ENCODE measurements at regions of chr2 and their contacts with region 1.

Region 1: GRCh38 chr2:216031960-216032689 is 18.8 kb upstream of the MREG start:
- DNase-seq: no peak
- H3K4me3 ChIP-seq: no peak overlapping the region
- H3K27ac ChIP-seq: no peak overlapping the region
- H3K4me1 ChIP-seq: no peaks in the 10 kb centered on the region
- H3K27me3 ChIP-seq: no peaks in the 10 kb centered on the region
- CTCF ChIP-seq: no peak
- POLR2A ChIP-seq: no peak

Region 2: GRCh38 chr2:214960677-214961076 is 1071.4 kb before region 1 on chr2:
- intact Hi-C with region 1: no loop called
- DNase-seq: no peak
- H3K4me3 ChIP-seq: no peak overlapping the region
- H3K27ac ChIP-seq: no peak overlapping the region
- H3K4me1 ChIP-seq: no peaks in the 10 kb centered on the region
- H3K27me3 ChIP-seq: no peaks in the 10 kb centered on the region
- CTCF ChIP-seq: no peak
- POLR2A ChIP-seq: no peak

Region 3: GRCh38 chr2:216047397-216047796 is 15.3 kb after region 1 on chr2:
- intact Hi-C with region 1: loop called (anchors 2 kb)
- DNase-seq: no peak
- H3K4me3 ChIP-seq: no peak overlapping the region
- H3K27ac ChIP-seq: no peak overlapping the region
- H3K4me1 ChIP-seq: no peaks in the 10 kb centered on the region
- H3K27me3 ChIP-seq: no peaks in the 10 kb centered on the region
- CTCF ChIP-seq: no peak
- POLR2A ChIP-seq: no peak

Region 4: GRCh38 chr2:216090369-216090786 is 58.3 kb after region 1 on chr2:
- intact Hi-C with region 1: no loop called
- DNase-seq: no peak
- H3K4me3 ChIP-seq: no peak overlapping the region
- H3K27ac ChIP-seq: no peak overlapping the region
- H3K4me1 ChIP-seq: no peaks in the 10 kb centered on the region
- H3K27me3 ChIP-seq: no peaks in the 10 kb centered on the region
- CTCF ChIP-seq: no peak
- POLR2A ChIP-seq: no peak

Measured in breast epithelium (tissue), 4 donors.